Right ventricle myocardium inferior (tissue), 1 donor: ENCODE measurements at regions of chr13 and their contacts with region 1.

Region 1: GRCh38 chr13:32310134-32310706 is 4.9 kb downstream of the ZAR1L start:
- DNase-seq: no peak
- ATAC-seq: peak; percentile 68

Region 2: DNA sequence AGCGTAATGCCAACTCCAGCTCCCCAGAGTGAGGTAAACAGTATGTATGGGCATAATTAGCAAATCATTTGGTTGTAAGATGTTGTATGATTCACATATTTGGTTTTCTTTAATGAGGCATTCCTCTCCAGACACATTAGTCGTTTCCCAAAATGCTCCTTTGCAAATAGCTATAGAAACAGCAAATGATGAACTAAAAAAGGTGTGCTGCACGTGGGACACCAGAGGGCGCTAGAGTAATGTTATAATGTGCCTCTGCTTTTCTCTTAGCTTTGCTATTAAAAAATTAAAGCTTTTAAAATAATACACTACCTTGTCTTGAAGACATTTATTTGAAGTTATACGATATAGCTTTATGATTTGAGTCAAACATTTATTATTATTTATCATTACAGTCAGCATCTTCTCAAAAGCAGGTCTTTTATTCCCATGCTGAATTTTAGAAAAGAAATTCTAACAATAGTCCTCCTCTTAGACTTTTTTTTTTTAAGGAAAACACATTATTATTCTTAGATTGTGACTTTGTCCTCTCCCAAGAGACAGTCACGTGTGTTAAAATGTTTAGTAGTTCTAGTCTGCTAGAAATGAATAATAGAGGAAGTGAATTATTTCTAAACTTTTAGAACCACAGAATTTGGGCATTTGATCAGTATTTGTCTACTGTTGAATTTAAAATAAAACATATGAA is 400.2 kb before region 1 on chr13:
- intact Hi-C with region 1: loop called (anchors 1 kb)
- DNase-seq: no peak
- ATAC-seq: peak; percentile 51

Region 3: DNA sequence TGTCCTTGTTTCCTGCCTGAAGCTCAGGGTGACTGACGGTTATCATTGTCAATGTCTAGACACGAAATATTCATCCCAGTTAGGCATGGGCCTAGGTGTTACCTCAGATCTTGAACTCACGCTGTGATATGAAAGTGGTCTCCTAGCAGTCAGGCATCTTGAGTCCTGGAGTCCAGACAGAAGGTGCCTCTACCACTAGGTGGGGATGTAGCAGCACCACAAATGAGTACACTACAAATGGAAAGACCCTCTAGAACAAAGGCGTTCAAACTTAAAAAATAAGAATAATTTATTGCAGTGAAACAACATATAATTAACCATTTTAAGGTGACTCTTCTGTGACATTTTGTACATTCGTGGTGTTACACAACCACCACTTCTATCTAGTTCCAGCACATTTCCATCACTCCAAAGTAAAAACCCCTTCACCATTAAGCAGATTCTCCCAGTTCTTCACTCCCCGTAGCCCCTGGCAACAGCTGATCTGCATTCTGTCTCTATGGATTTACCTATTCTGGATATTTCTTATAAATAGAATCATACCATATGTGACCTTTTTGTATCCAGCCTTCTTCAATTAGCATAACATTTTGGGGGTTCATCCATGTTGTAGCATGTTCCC is 290.5 kb before region 1 on chr13:
- intact Hi-C with region 1: loop called (anchors 5 kb)
- DNase-seq: no peak
- ATAC-seq: peak; percentile 40

Region 4: GRCh38 chr13:32246468-32246867 is 63.8 kb before region 1 on chr13:
- intact Hi-C with region 1: loop called (anchors 2 kb)
- DNase-seq: no peak
- ATAC-seq: peak; percentile 75

Region 5: GRCh38 chr13:32427852-32428580 is 117.8 kb after region 1 on chr13 and contains the start of gene N4BP2L1:
- intact Hi-C with region 1: loop called (anchors 5 kb)
- DNase-seq: peak; percentile 82
- ATAC-seq: peak; percentile 77
- total RNA-seq, gene N4BP2L1: 4.7 TPM

Region 6: DNA sequence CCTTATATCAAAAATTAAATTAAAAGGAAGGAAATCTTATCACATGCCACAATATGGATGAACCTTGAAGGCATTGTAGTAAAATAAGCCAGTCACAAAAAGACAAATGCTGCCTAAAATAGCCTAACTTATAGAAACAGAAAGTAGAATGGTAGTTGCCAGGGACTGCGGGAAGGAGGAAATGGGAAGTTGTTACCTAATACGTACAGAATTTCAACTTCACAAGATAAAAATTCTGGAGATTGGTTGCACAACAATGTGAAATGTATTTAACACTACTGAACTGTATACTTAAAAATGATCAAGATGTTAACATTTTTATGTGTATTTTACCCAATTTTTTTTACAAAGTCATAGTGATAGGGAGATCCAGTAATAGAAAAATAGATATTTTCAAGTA is 238.6 kb after region 1 on chr13:
- intact Hi-C with region 1: no loop called
- DNase-seq: no peak
- ATAC-seq: no peak